A549 (cell line): ENCODE measurements at regions of chr14 and their contacts with region 1.

Region 1: DNA sequence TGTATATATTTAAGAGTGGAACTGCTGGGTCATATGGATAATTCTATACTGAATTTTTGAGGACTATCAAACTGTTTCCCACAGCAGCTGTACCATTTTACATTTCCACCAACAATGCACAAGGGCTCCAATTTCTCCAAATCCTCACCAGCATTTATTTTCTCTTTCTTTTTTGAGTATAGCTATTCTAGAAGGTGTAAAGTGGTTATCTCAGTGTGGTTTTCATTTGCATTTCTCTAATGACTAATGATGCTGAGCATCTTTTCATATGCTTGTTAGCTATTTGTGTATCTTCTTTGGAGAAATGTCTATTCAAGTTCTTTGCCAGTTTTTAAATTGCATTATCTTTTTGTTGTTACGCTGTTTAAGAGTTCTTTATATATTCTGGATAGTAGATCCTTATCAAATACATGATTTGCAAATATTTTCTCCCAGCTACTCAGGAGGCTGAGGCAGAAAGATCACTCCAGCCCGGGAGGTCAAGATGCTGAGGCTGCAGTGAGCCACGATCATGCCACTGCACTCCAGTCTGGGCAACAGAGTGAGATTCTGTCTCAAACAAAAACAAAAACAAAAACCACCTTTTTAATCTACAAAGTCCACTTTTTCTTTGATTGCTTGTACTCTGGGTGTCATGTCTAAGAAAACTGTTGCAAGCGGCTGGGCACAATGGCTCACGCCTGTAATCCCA is 32.8 kb downstream of the GTF2A1 start:
- DNase-seq: no peak
- ATAC-seq: no peak
- H3K4me3 ChIP-seq: no peak overlapping the region
- H3K27ac ChIP-seq: no peak overlapping the region
- H3K4me1 ChIP-seq: peaks cover 7% of the 10 kb centered on the region; the same call in 2 of the 3 replicates
- CTCF ChIP-seq: no peak
- EP300 ChIP-seq: no peak
- POLR2A ChIP-seq: no peak
- RAD21 ChIP-seq: no peak

Region 2: GRCh38 chr14:81005540-81006228 is 182.3 kb before region 1 on chr14:
- CTCF ChIA-PET with region 1: no interaction called
- POLR2A ChIA-PET with region 1: no interaction called
- DNase-seq: no peak
- ATAC-seq: no peak
- H3K4me3 ChIP-seq: no peak overlapping the region
- H3K27ac ChIP-seq: no peak overlapping the region
- H3K4me1 ChIP-seq: no peaks in the 10 kb centered on the region
- CTCF ChIP-seq: no peak
- EP300 ChIP-seq: no peak
- POLR2A ChIP-seq: no peak
- RAD21 ChIP-seq: no peak

Region 3: GRCh38 chr14:81095539-81095938 is 92.4 kb before region 1 on chr14:
- CTCF ChIA-PET with region 1: no interaction called
- POLR2A ChIA-PET with region 1: no interaction called
- DNase-seq: no peak
- ATAC-seq: no peak
- H3K4me3 ChIP-seq: no peak overlapping the region
- H3K27ac ChIP-seq: no peak overlapping the region
- H3K4me1 ChIP-seq: no peaks in the 10 kb centered on the region
- CTCF ChIP-seq: no peak
- EP300 ChIP-seq: no peak
- POLR2A ChIP-seq: no peak
- RAD21 ChIP-seq: no peak

Region 4: GRCh38 chr14:81170104-81170828 is 17.7 kb before region 1 on chr14:
- CTCF ChIA-PET with region 1: interaction called, 13 read pairs
- POLR2A ChIA-PET with region 1: no interaction called
- DNase-seq: peak; percentile 89 to 91
- ATAC-seq: peak; percentile 100
- H3K4me3 ChIP-seq: peak overlapping the region; percentile 62
- H3K27ac ChIP-seq: peak overlapping the region; percentile 82 to 92
- H3K4me1 ChIP-seq: 0 out of 3 replicates have a peak, but pooled peaks cover 2% of the 10 kb centered on the region
- CTCF ChIP-seq: peak; percentile 89
- EP300 ChIP-seq: no peak
- POLR2A ChIP-seq: peak; percentile 94
- RAD21 ChIP-seq: peak; percentile 67 to 72

Region 5: DNA sequence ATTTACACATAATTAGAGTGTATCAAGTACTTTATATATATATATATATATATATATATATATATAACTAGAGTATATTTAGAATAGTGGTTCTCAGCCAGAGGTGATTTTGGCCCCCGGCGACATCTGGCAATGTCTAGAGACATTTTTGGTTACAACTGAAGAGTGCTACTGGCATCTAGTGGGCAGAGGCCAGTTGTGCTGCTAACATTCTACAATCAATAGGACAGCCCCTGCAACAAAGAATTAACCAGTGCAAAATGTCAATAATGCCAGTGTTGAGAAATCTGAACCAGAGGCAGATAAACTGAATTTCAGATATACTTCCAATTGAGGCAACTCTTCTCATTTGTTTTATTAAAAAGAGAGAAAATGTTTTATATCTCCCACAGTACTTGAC is 23.9 kb after region 1 on chr14:
- CTCF ChIA-PET with region 1: no interaction called
- POLR2A ChIA-PET with region 1: no interaction called
- DNase-seq: peak in 1 of 2 experiments; percentile 37
- ATAC-seq: peak; percentile 70 to 78; a peak in 4 of 6 replicates
- H3K4me3 ChIP-seq: no peak overlapping the region
- H3K27ac ChIP-seq: no peak overlapping the region
- H3K4me1 ChIP-seq: no peaks in the 10 kb centered on the region
- CTCF ChIP-seq: peak; percentile 40
- EP300 ChIP-seq: no peak
- POLR2A ChIP-seq: no peak
- RAD21 ChIP-seq: peak; percentile 50 to 53; a peak in 4 of 5 replicates

Region 6: DNA sequence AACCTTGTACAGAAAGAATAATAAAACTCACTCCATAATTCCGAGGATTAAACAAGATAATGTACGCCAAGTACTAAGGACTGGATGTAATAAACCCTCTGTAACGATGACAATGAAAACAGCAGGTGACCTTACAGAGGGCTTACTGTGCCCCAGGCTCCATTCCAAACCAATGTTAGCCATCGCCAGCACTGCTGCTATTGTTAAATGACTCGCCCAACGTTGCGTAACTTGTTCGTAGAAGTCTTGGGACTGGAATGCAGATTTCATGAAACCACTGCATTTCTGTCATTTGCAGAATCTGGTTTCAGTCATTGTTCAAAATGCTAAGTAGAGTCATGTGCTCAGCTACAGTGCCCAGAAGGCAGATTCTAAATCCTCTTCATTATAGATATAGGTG is 212.9 kb after region 1 on chr14:
- CTCF ChIA-PET with region 1: no interaction called
- POLR2A ChIA-PET with region 1: no interaction called
- DNase-seq: peak; percentile 17 to 59
- ATAC-seq: peak; percentile 58 to 61
- H3K4me3 ChIP-seq: no peak overlapping the region; the same call in 2 of the 3 replicates
- H3K27ac ChIP-seq: peak overlapping the region; percentile 64 to 72; a peak in 5 of 6 replicates
- H3K4me1 ChIP-seq: peaks cover 26% of the 10 kb centered on the region
- CTCF ChIP-seq: no peak
- EP300 ChIP-seq: peak in 1 of 2 experiments; percentile 17; a peak in 1 of 5 replicates
- POLR2A ChIP-seq: no peak
- RAD21 ChIP-seq: no peak